MCF 10A (cell line): ENCODE measurements at regions of chr13 and their contacts with region 1.

Region 1: DNA sequence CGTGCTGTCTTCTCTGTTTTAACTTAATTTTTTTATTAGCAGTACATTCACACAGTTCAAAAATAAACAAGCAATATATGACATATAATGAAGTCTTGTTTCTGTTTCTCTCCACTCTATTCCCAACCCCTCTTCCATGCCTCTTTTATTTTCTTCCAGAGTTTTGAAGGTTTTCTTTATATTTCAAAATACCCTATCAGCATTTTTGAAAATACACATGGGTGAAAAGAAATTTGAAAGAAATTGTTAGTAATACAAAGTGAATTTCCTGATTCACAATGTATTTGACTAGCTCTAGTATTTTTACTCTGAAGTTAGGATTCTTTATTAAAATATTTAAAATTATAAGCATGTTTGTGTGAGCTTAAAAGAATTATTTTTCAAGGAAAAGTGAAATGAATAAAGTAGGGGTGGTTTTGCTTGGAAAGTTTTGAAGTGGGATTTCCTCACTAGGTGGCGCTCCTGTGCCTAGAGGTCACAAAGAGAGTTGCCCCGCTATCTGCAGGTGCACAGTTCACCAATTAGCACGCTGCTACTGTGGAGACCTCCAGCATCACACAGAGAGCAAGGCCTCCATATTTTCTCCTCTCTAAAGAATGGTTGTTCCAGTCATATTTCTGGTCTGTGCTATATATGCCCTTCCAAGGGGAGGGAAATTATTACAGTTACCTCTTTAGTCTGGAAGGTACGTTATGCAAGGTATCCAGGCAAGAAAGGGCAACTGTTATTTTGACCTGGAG is 37.6 kb downstream of the SOX21 start:
- DNase-seq: peak; percentile 69
- H3K4me3 Mint-ChIP-seq: no peak overlapping the region
- H3K27ac Mint-ChIP-seq: no peak overlapping the region
- H3K4me1 Mint-ChIP-seq: no peaks in the 10 kb centered on the region
- H3K27me3 Mint-ChIP-seq: no peaks in the 10 kb centered on the region
- CTCF ChIP-seq: peak; percentile 70

Region 2: GRCh38 chr13:94660695-94661326 is 14.0 kb before region 1 on chr13:
- CTCF ChIA-PET with region 1: interaction called, 21 read pairs
- POLR2A ChIA-PET with region 1: no interaction called
- intact Hi-C with region 1: no loop called
- DNase-seq: peak; percentile 24
- H3K4me3 Mint-ChIP-seq: no peak overlapping the region
- H3K27ac Mint-ChIP-seq: no peak overlapping the region
- H3K4me1 Mint-ChIP-seq: peaks cover 15% of the 10 kb centered on the region
- H3K27me3 Mint-ChIP-seq: no peaks in the 10 kb centered on the region
- CTCF ChIP-seq: peak; percentile 15

Region 3: GRCh38 chr13:94878602-94879165 is 203.9 kb after region 1 on chr13:
- CTCF ChIA-PET with region 1: no interaction called
- POLR2A ChIA-PET with region 1: no interaction called
- intact Hi-C with region 1: no loop called
- DNase-seq: no peak
- H3K4me3 Mint-ChIP-seq: no peak overlapping the region
- H3K27ac Mint-ChIP-seq: no peak overlapping the region
- H3K4me1 Mint-ChIP-seq: no peaks in the 10 kb centered on the region
- H3K27me3 Mint-ChIP-seq: no peaks in the 10 kb centered on the region
- CTCF ChIP-seq: no peak

Region 4: DNA sequence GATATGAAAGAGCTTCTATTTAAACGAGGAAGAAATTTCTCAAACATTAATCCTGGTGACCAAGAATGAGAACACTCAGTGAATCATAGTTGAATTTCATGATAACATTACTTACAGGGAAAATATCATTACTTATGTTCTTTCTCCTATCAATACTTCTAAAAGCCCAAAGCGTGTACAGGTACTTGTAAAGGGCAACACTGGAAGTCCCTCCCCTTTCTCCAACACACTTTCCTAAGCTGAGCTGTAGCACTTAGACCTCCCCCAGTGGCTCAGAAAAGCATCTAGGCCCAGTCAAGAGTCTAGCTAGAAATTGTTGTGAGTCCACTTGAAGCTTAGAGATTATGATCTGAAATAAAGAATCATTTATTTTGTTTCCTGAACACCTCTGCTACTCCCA is 475.8 kb after region 1 on chr13:
- CTCF ChIA-PET with region 1: interaction called, 113 read pairs
- POLR2A ChIA-PET with region 1: interaction called, 5 read pairs
- intact Hi-C with region 1: no loop called
- DNase-seq: no peak
- H3K4me3 Mint-ChIP-seq: no peak overlapping the region
- H3K27ac Mint-ChIP-seq: no peak overlapping the region
- H3K4me1 Mint-ChIP-seq: peaks cover 7% of the 10 kb centered on the region
- H3K27me3 Mint-ChIP-seq: no peaks in the 10 kb centered on the region
- CTCF ChIP-seq: no peak